Common myeloid progenitor, CD34-positive (primary cell): ENCODE measurements at regions of chr12 and their contacts with region 1.

Region 1: GRCh38 chr12:8722286-8722685 is 24.5 kb downstream of the RIMKLB start:
- DNase-seq: no peak
- H3K4me3 ChIP-seq: no peak overlapping the region
- H3K27ac ChIP-seq: no peak overlapping the region
- H3K4me1 ChIP-seq: no peaks in the 10 kb centered on the region
- H3K27me3 ChIP-seq: no peaks in the 10 kb centered on the region

Region 2: DNA sequence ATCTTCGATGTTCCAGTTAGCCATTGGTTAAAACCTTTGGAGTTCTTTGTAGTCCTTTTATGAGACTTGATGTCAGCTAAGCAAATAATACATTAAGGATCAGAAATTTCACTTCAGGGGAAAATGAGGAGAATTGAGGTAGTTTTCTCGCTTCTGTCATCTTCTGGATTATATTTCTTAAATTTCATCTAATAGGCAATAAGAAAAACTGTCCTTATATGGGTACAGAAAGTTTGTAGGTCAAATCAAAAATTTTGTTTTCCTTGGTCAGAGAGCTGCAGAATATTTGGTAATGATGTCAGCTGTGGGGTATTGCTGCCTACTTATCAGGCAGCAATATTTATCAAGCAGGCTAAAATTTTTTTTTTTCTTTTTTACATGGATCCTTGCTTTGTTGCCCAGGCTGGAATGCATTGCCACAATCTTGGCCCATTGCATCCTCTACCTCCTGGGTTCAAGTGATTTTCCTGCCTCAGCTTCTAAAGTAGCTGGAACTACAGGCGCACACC is 12.6 kb after region 1 on chr12:
- CTCF ChIA-PET with region 1: interaction called, 18 read pairs
- POLR2A ChIA-PET with region 1: no interaction called
- DNase-seq: no peak
- H3K4me3 ChIP-seq: no peak overlapping the region
- H3K27ac ChIP-seq: no peak overlapping the region
- H3K4me1 ChIP-seq: no peaks in the 10 kb centered on the region
- H3K27me3 ChIP-seq: no peaks in the 10 kb centered on the region

Region 3: GRCh38 chr12:8780389-8780788 is 58.1 kb after region 1 on chr12:
- CTCF ChIA-PET with region 1: no interaction called
- POLR2A ChIA-PET with region 1: no interaction called
- DNase-seq: peak; percentile 53 to 73 (median 72)
- H3K4me3 ChIP-seq: no peak overlapping the region
- H3K27ac ChIP-seq: no peak overlapping the region
- H3K4me1 ChIP-seq: peaks cover 0 to 5% (median 0%) of the 10 kb centered on the region in 4 experiments
- H3K27me3 ChIP-seq: no peaks in the 10 kb centered on the region

Region 4: DNA sequence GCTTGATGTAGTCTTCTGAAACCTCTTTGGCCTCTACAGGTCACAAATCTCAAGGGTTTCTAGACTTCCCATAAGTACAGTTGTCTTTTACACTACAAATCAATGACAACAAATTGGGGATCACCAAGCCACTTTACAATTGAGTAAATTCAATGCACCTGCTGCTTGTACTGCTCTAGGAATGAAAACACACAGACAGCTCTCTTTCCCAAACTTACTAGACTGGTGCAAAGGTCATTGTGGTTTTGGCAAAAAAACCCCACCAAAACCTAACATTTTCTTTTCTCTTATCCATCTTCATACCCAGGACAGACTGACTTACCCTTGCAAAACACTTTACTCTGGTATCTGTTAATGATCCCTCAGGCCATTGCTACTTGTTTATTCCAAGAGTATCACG is 224.4 kb after region 1 on chr12:
- CTCF ChIA-PET with region 1: no interaction called
- POLR2A ChIA-PET with region 1: no interaction called
- DNase-seq: no peak
- H3K4me3 ChIP-seq: no peak overlapping the region
- H3K27ac ChIP-seq: no peak overlapping the region
- H3K4me1 ChIP-seq: peaks cover 16 to 38% (median 28%) of the 10 kb centered on the region in 4 experiments
- H3K27me3 ChIP-seq: no peaks in the 10 kb centered on the region

Region 5: DNA sequence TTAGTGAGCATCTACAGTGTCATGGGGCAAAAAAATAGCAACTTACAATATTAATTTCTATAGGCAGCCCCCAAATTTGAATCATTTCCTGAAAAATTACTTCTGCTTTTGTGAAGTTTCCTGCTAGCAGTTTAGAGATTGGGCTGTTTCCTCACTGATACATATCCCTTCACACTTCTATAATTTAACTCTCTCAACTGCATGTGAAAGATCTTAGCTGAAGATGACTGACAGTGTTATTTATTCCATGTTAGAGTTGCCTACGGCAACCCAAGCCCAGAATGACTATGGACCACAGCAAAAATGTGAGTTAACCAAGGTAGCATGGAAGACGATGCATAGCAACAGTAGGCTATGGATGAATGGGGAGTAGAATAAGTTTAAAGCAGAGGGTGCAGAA is 267.1 kb after region 1 on chr12 and contains the start of gene KLRG1:
- CTCF ChIA-PET with region 1: no interaction called
- POLR2A ChIA-PET with region 1: no interaction called
- DNase-seq: peak; percentile 63 to 96 (median 90)
- H3K4me3 ChIP-seq: peak within 1 kb of the TSS in 6 of 7 experiments; percentile 23 to 68 (median 55)
- H3K27ac ChIP-seq: peak within 1 kb of the TSS; percentile 90 to 96
- H3K4me1 ChIP-seq: peaks cover 22 to 69% (median 49%) of the 10 kb centered on the region in 4 experiments
- H3K27me3 ChIP-seq: no peaks in the 10 kb centered on the region

Region 6: GRCh38 chr12:9118158-9118557 is 395.9 kb after region 1 on chr12:
- CTCF ChIA-PET with region 1: no interaction called
- POLR2A ChIA-PET with region 1: no interaction called
- DNase-seq: peak; percentile 90 to 99 (median 98)
- H3K4me3 ChIP-seq: no peak overlapping the region
- H3K27ac ChIP-seq: no peak overlapping the region
- H3K4me1 ChIP-seq: peaks cover 18 to 38% (median 23%) of the 10 kb centered on the region in 4 experiments
- H3K27me3 ChIP-seq: no peaks in the 10 kb centered on the region